ENCODE measurements at regions of chr2 and their contacts with region 1.

Region 1: GRCh38 chr2:143162123-143162837 is 33.1 kb downstream of the ARHGAP15 start:
- DNase-seq: peak; percentile 11 to 56 (median 38)
- ATAC-seq: peak; percentile 72 to 78
- H3K4me3 ChIP-seq: no peak overlapping the region
- H3K27ac ChIP-seq: no peak overlapping the region
- H3K4me1 ChIP-seq: no peaks in the 10 kb centered on the region
- H3K27me3 ChIP-seq: no peaks in the 10 kb centered on the region

Region 2: GRCh38 chr2:143223556-143223955 is 61.3 kb after region 1 on chr2:
- intact Hi-C with region 1: loop called in 2 of 4 experiments (anchors 5 kb)
- DNase-seq: no peak
- ATAC-seq: no peak
- H3K4me3 ChIP-seq: no peak overlapping the region
- H3K27ac ChIP-seq: no peak overlapping the region
- H3K4me1 ChIP-seq: peaks cover 1% of the 10 kb centered on the region
- H3K27me3 ChIP-seq: no peaks in the 10 kb centered on the region

Measured in right cardiac atrium (tissue), 5 donors.